Activated CD4-positive, alpha-beta T cell treated with anti-CD3 and anti-CD28 coated beads, Interleukin-2, amount 10 ng/mL, durations not matched to agents 7 days and 5 days (primary cell): ENCODE measurements at regions of chr5 and their contacts with region 1.

Region 1: DNA sequence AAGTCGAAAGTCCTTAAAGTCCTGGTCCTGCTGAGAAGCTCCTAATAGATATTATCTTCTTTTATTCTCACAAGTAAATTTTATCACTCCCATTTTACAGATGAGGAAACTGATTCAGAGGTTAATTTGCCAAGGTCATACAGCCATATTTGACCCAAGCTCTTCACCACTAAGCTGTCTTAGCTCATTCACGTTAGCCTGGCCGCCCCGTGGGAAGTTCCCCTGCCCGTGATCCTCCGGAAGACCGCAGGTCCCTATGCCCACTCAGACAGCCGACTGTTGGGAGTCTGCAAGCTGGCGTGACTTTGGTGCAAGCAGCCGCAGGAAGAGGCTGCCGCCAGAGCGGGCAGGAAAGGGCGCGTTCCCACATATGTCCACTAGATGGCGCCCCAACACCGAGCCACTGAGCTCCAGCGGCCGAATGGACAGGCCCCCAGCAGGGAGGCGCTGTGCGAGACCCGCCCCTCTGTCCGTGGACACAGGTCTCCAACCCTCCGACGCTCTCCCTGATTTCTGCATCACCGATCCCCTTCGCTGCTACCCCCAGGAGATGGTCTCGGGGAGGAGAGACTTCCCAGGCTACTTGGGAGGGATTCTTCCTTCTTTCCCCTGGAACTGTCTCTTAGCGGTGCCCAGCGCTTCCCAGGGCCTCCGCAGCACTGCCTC is 10.0 kb upstream of the ARAP3 start:
- DNase-seq: peak; percentile 85
- H3K4me3 Mint-ChIP-seq: peak overlapping the region; percentile 55
- H3K27ac Mint-ChIP-seq: peak overlapping the region; percentile 54
- H3K4me1 Mint-ChIP-seq: peaks cover 31% of the 10 kb centered on the region
- H3K27me3 Mint-ChIP-seq: peaks cover 28% of the 10 kb centered on the region

Region 2: GRCh38 chr5:141681695-141682641 is 10.0 kb before region 1 on chr5 and contains the start of gene ARAP3:
- CTCF ChIA-PET with region 1: interaction called, 43 read pairs
- POLR2A ChIA-PET with region 1: no interaction called
- DNase-seq: peak; percentile 26
- H3K4me3 Mint-ChIP-seq: peak within 1 kb of the TSS; percentile 59
- H3K27ac Mint-ChIP-seq: peak within 1 kb of the TSS; percentile 88
- H3K4me1 Mint-ChIP-seq: peaks cover 35% of the 10 kb centered on the region
- H3K27me3 Mint-ChIP-seq: peaks cover 3% of the 10 kb centered on the region
- total RNA-seq, gene ARAP3: 4.2 to 4.6 TPM

Region 3: GRCh38 chr5:141923448-141924352 is 231.7 kb after region 1 on chr5 and contains the start of gene DELE1:
- CTCF ChIA-PET with region 1: interaction called, 10 read pairs
- POLR2A ChIA-PET with region 1: no interaction called
- DNase-seq: peak; percentile 94
- H3K4me3 Mint-ChIP-seq: peak within 1 kb of the TSS; percentile 87
- H3K27ac Mint-ChIP-seq: peak within 1 kb of the TSS; percentile 88
- H3K4me1 Mint-ChIP-seq: peaks cover 35% of the 10 kb centered on the region
- H3K27me3 Mint-ChIP-seq: no peaks in the 10 kb centered on the region
- total RNA-seq, gene DELE1: 71.5 to 72.1 TPM